Head of caudate nucleus (tissue), 42 donors: ENCODE measurements at regions of chr7 and their contacts with region 1.

Region 1: DNA sequence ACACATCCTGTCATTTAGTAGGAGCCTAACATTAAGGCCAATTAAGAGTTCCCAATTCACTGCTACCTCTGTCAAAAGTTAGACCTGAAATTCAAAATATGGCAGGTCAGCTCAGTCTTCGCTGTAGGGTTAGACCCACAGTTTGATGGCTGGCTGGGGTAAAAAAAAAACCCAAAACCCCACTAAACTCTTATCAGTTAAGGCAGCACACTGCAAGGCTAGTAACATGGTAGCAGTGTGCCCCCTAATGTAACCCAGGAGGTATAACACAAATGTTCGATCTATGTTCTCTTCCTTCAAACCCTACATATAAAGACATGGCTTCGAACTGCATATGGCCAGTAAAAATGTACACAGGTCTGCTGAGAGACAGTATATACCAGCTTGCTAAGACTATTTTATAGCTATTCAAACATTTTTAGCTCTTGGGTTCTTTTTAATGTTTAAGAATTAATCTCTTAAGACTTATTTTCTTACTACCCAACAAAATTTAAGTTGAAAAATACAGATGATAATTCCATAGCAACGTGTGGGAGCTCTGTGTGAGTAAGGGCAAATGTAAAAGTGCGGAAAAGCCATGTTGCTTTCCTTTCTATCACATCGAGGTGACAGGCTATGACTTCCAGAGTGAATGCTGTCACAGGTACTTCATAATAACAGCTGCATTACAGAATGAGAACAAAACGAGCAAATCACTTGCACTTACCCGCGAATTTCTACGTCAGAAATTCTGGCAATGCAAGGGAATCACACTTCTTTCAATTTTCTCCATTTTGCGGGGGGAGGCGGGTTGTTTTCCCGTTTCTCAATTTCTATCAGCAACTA is 168.4 kb upstream of the IMMP2L start:
- DNase-seq: no peak

Region 2: DNA sequence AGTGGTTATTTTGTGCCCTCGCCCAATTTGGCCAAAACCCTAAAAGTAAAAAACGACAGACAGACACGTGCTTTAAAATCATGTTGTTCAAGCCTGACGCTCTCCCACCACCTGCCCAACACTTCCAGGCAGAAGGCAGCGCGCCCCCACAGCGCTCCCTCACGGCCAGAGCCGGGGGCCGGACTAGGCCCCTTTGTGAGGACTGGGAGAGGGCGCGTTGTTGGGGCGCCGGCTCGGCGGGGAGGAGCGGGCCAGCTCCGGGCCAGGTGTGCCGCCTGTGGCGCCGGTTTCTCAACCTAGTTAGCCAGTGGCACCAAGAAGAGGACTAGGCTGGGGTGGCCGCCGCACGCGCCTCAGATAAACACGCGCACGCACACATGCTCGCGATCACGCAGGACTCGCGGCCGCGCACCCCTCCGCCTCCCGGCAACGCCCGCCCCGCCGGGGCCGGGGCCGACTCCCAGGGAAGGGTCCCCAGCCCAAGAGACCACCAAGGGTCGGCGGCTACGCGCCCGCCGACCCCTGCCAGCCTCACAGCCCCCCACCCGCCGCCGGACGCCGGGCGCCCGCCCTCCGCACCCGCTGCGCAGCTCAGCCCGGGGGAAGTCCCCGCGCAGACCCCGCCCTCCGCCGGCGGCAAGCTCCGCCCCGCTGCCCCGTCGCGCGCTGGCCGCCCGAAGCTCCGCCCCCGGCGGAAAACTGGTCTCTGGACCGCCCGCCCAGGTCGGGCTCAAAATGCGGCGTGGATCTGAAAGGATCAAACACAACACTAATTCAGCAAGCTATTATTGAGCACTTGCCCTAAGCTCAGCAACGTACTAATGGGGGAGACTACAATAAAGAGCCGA is 168.6 kb before region 1 on chr7 and contains the start of gene IMMP2L:
- intact Hi-C with region 1: loop called (anchors 5 kb)
- DNase-seq: peak; percentile 68 to 95 (median 90)

Region 3: DNA sequence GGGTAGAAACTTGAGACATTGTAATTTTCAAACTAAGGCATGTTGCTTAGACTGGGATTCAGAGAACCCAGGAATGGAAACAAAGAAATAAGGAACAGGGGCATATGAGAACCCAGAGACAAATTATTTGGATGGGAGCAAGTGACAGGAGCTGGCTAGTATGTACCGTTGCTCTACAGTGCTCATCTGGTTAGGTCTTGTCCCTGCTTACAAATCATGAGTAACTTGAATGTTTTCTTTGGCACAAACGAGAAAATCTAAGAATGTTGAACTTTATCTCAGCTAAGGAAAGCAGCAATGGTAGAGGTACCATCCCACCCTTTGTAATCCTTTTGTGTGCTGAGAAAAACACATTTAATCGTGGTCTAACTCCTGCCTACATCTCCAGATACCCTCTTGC is 52.4 kb before region 1 on chr7:
- intact Hi-C with region 1: no loop called
- DNase-seq: no peak

Region 4: GRCh38 chr7:111803015-111803758 is 72.5 kb after region 1 on chr7:
- intact Hi-C with region 1: no loop called
- DNase-seq: no peak